ENCODE measurements at regions of chr11 and their contacts with region 1.

Region 1: GRCh38 chr11:44191322-44192016 is 96.0 kb downstream of the EXT2 start:
- DNase-seq: no peak
- H3K4me3 Mint-ChIP-seq: no peak overlapping the region
- H3K27ac Mint-ChIP-seq: no peak overlapping the region
- H3K4me1 Mint-ChIP-seq: peaks cover 32% of the 10 kb centered on the region
- H3K27me3 Mint-ChIP-seq: no peaks in the 10 kb centered on the region

Region 2: DNA sequence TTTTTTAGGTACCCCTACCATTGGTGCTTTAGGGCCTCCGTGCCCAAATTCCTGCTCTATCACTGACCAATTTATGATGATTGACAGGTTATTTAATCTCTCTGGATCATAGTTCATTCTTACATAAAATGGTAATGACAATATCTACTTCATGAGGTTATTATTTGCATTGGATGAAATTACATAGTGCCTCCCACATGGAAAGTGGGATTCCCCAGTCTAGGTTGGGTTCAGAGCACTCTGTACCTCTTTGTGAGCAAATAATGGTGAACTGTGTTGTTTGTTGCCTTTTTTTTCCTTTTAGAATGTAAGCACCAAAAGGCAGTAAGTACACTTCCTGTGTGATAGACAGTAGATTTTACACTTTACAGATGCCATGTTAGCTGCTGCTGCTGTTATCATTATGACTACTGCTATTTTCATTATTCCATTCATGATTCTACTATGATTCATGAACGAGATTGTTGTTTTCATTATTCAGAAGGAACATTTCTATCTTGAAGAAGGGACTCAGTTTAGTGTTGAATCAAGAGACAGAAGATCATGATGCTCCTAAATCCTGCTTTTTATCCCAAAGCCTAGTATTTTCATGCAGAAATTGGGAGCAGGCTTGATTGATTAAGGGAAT is 17.6 kb after region 1 on chr11:
- CTCF ChIA-PET with region 1: interaction called, 3 read pairs
- POLR2A ChIA-PET with region 1: interaction called, 4 read pairs
- intact Hi-C with region 1: loop called (anchors 1 kb)
- DNase-seq: no peak
- H3K4me3 Mint-ChIP-seq: no peak overlapping the region
- H3K27ac Mint-ChIP-seq: peak overlapping the region; percentile 31
- H3K4me1 Mint-ChIP-seq: peaks cover 13% of the 10 kb centered on the region
- H3K27me3 Mint-ChIP-seq: no peaks in the 10 kb centered on the region

Region 3: DNA sequence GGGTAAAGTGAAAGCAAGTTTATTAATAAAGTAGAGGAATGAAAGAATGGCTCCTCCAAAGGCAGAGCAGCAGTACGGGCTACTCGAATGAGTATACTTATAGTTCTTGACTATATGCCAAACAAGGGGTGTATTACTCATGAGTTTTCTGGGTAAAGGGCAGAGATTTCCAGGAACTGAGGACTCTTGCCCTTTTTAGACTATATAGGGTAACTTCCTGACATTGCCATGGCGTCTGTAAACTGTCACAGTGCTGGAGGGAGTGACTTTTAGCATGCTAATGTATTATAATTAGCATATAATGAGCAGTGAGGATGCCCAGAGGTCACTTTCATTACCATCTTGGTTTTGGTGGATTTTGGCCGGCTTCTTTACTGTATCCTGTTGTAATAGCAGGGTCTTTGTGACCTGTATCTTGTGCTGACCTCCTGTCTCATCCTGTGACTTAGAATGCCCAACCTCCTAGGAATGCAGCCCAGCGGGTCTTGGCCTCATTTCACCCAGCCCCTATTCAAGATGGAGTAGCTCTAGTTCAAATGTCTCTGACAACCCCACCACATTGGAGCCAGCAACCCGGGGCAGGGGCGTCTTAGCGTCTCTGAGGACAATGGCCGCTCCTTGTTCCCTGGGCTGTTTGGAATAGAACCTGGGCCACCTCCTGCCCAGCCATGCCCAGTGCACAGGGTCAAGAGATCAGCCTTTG is 339.1 kb after region 1 on chr11:
- CTCF ChIA-PET with region 1: no interaction called
- POLR2A ChIA-PET with region 1: no interaction called
- intact Hi-C with region 1: loop called (anchors 2 kb)
- DNase-seq: peak; percentile 52
- H3K4me3 Mint-ChIP-seq: no peak overlapping the region
- H3K27ac Mint-ChIP-seq: peak overlapping the region; percentile 77
- H3K4me1 Mint-ChIP-seq: peaks cover 44% of the 10 kb centered on the region
- H3K27me3 Mint-ChIP-seq: peaks cover 5% of the 10 kb centered on the region